HepG2 (cell line): ENCODE measurements at regions of chr18 and their contacts with region 1.

Region 1: DNA sequence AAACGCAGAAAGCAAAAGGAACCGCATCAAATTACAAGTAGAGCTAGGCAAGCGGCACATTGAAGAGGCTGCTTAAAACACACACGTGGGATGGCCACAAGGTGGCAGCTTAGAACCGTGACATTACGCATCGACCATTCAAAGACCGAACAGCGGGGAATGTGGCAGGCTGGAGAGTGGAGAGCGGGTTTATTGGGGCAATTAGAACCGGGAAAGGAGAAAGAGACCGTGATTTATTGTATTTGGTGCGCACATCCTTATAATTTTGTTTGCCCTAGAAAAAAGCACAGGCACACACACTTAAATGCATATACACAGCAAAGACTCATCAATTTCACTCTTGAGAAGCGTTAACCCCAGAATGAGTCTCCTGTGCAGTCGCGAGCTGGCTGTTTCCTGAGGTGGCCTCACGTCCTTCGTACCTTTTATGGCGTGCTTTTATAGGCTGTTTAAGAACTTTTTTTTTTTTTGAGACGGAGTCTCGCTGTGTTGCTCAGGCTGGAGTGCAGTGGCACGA is 31.7 kb upstream of the MEP1B start:
- DNase-seq: peak; percentile 81
- ATAC-seq: peak; percentile 98
- H3K4me3 ChIP-seq: peak overlapping the region in 2 of 3 experiments; percentile 40 to 57; a peak in 3 of 6 replicates
- H3K27ac ChIP-seq: no peak overlapping the region
- H3K4me1 ChIP-seq: peaks cover 6% of the 10 kb centered on the region; the same call in 1 of the 2 replicates
- H3K27me3 ChIP-seq: peaks cover 1 to 3% of the 10 kb centered on the region in 2 experiments; a peak in 3 of 5 replicates
- CTCF ChIP-seq: peak; percentile 94
- EP300 ChIP-seq: no peak
- POLR2A ChIP-seq: no peak
- RAD21 ChIP-seq: peak; percentile 82

Region 2: DNA sequence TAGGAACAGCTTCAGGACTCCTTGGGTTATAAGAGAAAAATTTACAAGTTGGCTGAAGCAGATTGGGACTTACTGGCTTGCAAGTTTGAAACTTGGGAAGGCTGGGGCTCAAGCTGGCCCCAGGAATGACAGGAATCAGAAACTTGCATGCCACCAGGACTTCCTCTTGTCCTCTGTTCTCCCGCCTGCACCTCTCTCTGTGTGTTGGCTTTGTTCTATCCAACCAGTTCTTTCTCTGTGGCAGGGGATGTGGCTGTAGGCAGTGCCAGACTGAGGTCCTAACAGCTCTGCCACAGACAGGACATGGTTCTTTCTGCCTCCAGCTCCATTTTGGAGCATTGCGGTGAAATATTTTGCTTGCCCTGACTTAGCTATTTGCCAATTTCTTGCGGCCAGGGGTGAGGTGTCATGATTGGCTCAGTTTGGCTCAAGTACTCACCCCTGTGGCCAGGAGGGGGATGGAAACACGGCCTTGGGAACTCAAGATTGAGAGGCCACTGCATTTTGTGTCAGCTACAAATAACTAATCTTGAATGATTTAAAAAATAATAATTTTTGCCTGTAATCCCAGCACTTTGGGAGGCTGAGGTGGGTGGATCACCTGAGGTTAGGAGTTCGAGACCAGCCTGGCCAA is 80.6 kb after region 1 on chr18:
- CTCF ChIA-PET with region 1: no interaction called
- POLR2A ChIA-PET with region 1: no interaction called
- in situ Hi-C with region 1: no loop called
- intact Hi-C with region 1: loop called (anchors 1 kb)
- DNase-seq: no peak
- ATAC-seq: peak; percentile 44; the same call in 1 of the 3 replicates
- H3K4me3 ChIP-seq: no peak overlapping the region
- H3K27ac ChIP-seq: no peak overlapping the region
- H3K4me1 ChIP-seq: no peaks in the 10 kb centered on the region
- H3K27me3 ChIP-seq: no peaks in the 10 kb centered on the region
- CTCF ChIP-seq: peak; percentile 33; the same call in 1 of the 2 replicates
- EP300 ChIP-seq: no peak
- POLR2A ChIP-seq: no peak
- RAD21 ChIP-seq: no peak

Region 3: GRCh38 chr18:32271672-32272208 is 113.6 kb after region 1 on chr18:
- CTCF ChIA-PET with region 1: interaction called, 3 read pairs
- POLR2A ChIA-PET with region 1: interaction called, 3 read pairs
- in situ Hi-C with region 1: loop called (anchors 10 kb)
- intact Hi-C with region 1: loop called (anchors 1 kb)
- DNase-seq: peak; percentile 36
- ATAC-seq: peak; percentile 90
- H3K4me3 ChIP-seq: no peak overlapping the region
- H3K27ac ChIP-seq: no peak overlapping the region
- H3K4me1 ChIP-seq: no peaks in the 10 kb centered on the region
- H3K27me3 ChIP-seq: no peaks in the 10 kb centered on the region
- CTCF ChIP-seq: peak; percentile 81
- EP300 ChIP-seq: no peak
- POLR2A ChIP-seq: no peak
- RAD21 ChIP-seq: peak; percentile 75

Region 4: DNA sequence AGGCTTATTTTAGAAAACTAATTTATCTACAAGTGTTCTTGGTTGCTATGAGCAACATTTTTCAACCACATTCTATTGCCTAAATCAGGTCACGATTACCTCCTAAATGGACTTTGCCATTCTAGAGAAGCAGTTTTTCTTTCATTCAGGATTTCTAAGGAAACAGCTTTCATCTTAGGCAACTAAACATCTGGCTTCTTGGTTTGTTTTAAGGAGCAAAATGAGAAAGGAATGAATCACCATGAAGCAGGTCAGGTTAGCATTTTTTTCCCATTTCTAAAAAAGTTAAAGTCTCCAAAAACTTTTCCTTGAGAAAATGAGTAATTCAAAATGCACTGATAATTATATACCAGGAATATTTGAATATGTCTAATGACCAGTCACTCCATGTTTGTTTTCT is 197.7 kb after region 1 on chr18:
- CTCF ChIA-PET with region 1: no interaction called
- POLR2A ChIA-PET with region 1: no interaction called
- in situ Hi-C with region 1: no loop called
- intact Hi-C with region 1: loop called (anchors 5 kb)
- DNase-seq: no peak
- ATAC-seq: no peak
- H3K4me3 ChIP-seq: no peak overlapping the region
- H3K27ac ChIP-seq: no peak overlapping the region
- H3K4me1 ChIP-seq: peaks cover 13% of the 10 kb centered on the region
- H3K27me3 ChIP-seq: no peaks in the 10 kb centered on the region
- CTCF ChIP-seq: no peak
- EP300 ChIP-seq: no peak
- POLR2A ChIP-seq: no peak
- RAD21 ChIP-seq: no peak

Region 5: DNA sequence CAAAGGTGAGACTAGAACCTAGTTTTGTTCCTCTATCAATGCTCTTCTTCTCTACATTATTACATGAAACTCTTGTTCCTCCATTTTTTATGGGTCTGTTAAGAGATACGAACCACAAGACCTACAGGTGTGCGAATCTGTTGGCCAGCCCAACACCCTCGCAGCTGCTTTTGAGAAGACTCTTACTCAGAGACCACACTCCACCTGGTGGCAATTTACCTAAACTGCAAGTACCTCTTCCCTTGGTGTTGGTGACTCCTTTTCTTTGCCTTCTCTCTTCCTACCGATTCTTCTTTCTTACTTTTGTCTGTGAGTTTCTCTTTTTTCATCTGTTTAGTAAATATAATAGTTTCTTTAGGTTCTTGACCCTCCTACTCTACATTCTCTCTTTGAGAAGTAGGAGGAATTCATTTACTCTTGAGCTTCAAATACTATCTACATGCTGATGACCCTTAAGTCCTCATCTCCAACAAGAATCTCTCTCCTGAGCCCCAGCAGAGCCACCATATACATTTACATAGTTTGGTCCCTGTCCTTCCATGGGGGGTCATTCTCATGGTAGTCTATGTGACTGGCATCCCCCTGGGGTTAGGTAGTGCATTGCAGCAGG is 394.4 kb after region 1 on chr18:
- CTCF ChIA-PET with region 1: interaction called, 84 read pairs
- POLR2A ChIA-PET with region 1: no interaction called
- in situ Hi-C with region 1: loop called (anchors 5 kb)
- intact Hi-C with region 1: loop called (anchors 1 kb)
- DNase-seq: peak; percentile 68
- ATAC-seq: peak; percentile 85
- H3K4me3 ChIP-seq: no peak overlapping the region
- H3K27ac ChIP-seq: no peak overlapping the region
- H3K4me1 ChIP-seq: no peaks in the 10 kb centered on the region
- H3K27me3 ChIP-seq: no peaks in the 10 kb centered on the region; a peak in 2 of 5 replicates
- CTCF ChIP-seq: peak; percentile 79
- EP300 ChIP-seq: no peak
- POLR2A ChIP-seq: no peak
- RAD21 ChIP-seq: peak; percentile 45; the same call in 1 of the 2 replicates